ENCODE measurements at regions of chr11 and their contacts with region 1.

Region 1: GRCh38 chr11:119101759-119102423 is at the start of gene DPAGT1:
- DNase-seq: peak; percentile 86 to 89 (median 88)
- H3K4me3 ChIP-seq: peak within 1 kb of the TSS; percentile 87 to 98
- H3K4me3 Mint-ChIP-seq: peak within 1 kb of the TSS; percentile 93 to 99 (median 97)
- H3K27ac ChIP-seq: peak within 1 kb of the TSS; percentile 91
- H3K27ac Mint-ChIP-seq: peak within 1 kb of the TSS; percentile 93 to 100 (median 99)
- H3K4me1 ChIP-seq: peaks cover 41% of the 10 kb centered on the region
- H3K4me1 Mint-ChIP-seq: peaks cover 27 to 60% (median 43%) of the 10 kb centered on the region in 4 donors
- H3K27me3 ChIP-seq: no peaks in the 10 kb centered on the region
- H3K27me3 Mint-ChIP-seq: no peaks in the 10 kb centered on the region
- total RNA-seq, gene DPAGT1: 52.0 to 52.3 TPM

Region 2: DNA sequence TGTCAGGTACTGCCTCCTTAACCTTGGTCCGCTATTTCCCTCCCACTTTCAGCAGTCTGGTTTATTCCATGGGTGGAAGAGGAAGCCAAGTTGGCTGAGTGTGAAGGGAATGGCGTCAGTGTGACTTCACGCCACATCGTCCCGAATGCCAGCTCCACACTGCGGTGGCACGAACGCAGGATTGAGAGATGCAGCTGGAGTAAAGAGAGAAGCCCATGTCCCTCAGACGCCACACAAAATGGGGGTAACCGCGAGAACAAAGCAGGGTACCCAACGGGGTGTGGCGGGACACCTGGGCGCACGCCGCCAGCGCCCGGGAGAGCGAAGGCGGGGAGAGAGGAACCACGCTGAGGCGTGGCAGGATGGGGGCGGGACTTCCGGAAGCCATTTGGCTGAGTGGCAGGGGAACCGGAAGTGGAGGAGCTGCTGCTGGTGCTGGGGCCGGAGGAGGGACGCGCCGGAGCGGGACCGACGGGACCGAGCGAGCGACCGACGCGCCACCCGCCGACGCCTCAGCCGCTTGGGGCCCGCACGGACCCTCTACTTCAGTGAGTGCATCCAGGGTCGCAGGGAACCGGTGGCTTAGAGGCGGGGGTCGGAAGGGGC is 1957.9 kb before region 1 on chr11 and contains the start of gene PAFAH1B2:
- CTCF ChIA-PET with region 1: no interaction called
- POLR2A ChIA-PET with region 1: no interaction called
- intact Hi-C with region 1: loop called (anchors 5 kb)
- DNase-seq: peak; percentile 94 to 95 (median 94)
- H3K4me3 ChIP-seq: peak within 1 kb of the TSS; percentile 68 to 93
- H3K4me3 Mint-ChIP-seq: peak within 1 kb of the TSS; percentile 97 to 100 (median 99)
- H3K27ac ChIP-seq: peak within 1 kb of the TSS; percentile 70
- H3K27ac Mint-ChIP-seq: peak within 1 kb of the TSS; percentile 92 to 99 (median 98)
- H3K4me1 ChIP-seq: peaks cover 46% of the 10 kb centered on the region
- H3K4me1 Mint-ChIP-seq: peaks cover 33 to 56% (median 44%) of the 10 kb centered on the region in 4 donors
- H3K27me3 ChIP-seq: no peaks in the 10 kb centered on the region
- H3K27me3 Mint-ChIP-seq: peaks cover 2 to 6% of the 10 kb centered on the region in 2 donors
- total RNA-seq, gene PAFAH1B2: 61.6 to 64.2 TPM

Region 3: GRCh38 chr11:119057000-119057769 is 44.7 kb before region 1 on chr11 and contains the start of gene HYOU1:
- CTCF ChIA-PET with region 1: interaction called, 5 read pairs
- POLR2A ChIA-PET with region 1: interaction called, 12 read pairs
- intact Hi-C with region 1: loop called (anchors 1 kb)
- DNase-seq: peak; percentile 98
- H3K4me3 ChIP-seq: peak within 1 kb of the TSS; percentile 82 to 87
- H3K4me3 Mint-ChIP-seq: peak within 1 kb of the TSS; percentile 92 to 98 (median 97)
- H3K27ac ChIP-seq: peak within 1 kb of the TSS; percentile 91
- H3K27ac Mint-ChIP-seq: peak within 1 kb of the TSS; percentile 91 to 98 (median 97)
- H3K4me1 ChIP-seq: peaks cover 25% of the 10 kb centered on the region
- H3K4me1 Mint-ChIP-seq: peaks cover 20 to 52% (median 39%) of the 10 kb centered on the region in 4 donors
- H3K27me3 ChIP-seq: no peaks in the 10 kb centered on the region
- H3K27me3 Mint-ChIP-seq: no peaks in the 10 kb centered on the region
- total RNA-seq, gene HYOU1: 136 to 146 TPM

Region 4: GRCh38 chr11:119115484-119116234 is 13.8 kb after region 1 on chr11:
- CTCF ChIA-PET with region 1: interaction called, 7 read pairs
- POLR2A ChIA-PET with region 1: interaction called, 118 read pairs
- intact Hi-C with region 1: no loop called
- DNase-seq: peak; percentile 56 to 65 (median 58)
- H3K4me3 ChIP-seq: peak overlapping the region in 1 of 2 donors; percentile 38
- H3K4me3 Mint-ChIP-seq: peak overlapping the region; percentile 75 to 87 (median 86)
- H3K27ac ChIP-seq: peak overlapping the region; percentile 63
- H3K27ac Mint-ChIP-seq: peak overlapping the region; percentile 83 to 97 (median 97)
- H3K4me1 ChIP-seq: peaks cover 37% of the 10 kb centered on the region
- H3K4me1 Mint-ChIP-seq: peaks cover 17 to 51% (median 30%) of the 10 kb centered on the region in 4 donors
- H3K27me3 ChIP-seq: no peaks in the 10 kb centered on the region
- H3K27me3 Mint-ChIP-seq: no peaks in the 10 kb centered on the region

Region 5: DNA sequence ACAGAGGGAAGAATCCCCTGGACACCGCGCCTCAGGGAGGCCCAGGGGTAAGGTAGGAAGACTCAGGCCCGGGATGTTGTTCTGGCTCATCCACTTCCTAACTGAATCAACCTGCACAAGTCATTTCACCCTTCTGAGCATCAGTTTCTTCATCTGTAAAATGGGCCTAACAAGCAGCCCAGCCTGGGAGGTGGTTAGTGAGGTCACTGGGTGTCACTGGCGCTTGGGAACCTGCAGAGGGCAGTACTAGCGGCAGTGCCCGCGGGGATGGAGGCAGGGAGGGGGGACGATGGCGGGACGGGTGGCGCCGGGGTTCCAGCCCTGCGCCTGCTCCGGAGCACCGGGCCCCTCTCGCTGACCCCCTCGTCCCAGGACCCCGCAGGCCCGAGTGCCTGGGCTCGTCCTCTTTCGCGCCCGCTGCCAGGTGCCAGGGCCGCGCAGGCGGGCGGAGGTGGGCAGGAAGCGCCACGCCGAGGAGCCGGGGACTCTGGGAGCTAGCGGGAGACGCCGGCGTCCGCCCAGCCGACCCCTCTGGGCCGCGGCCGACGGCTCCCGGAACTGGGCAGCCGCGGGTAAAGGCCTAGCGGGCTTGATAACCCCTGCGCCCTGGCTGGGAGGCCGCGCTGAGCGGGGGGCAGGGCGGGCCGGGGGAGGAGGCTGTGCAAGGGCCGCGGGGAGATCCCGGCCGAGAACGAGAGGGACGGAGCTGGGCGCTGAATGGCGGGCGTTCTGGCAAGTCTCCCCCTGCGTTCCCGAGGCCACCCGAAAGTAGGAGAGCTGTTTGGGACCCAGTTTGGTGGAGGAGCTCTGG is 66.8 kb after region 1 on chr11 and contains the start of gene NLRX1:
- CTCF ChIA-PET with region 1: interaction called, 11 read pairs
- POLR2A ChIA-PET with region 1: interaction called, 11 read pairs
- intact Hi-C with region 1: no loop called
- DNase-seq: peak; percentile 81 to 83 (median 82)
- H3K4me3 ChIP-seq: peak within 1 kb of the TSS; percentile 78 to 79
- H3K4me3 Mint-ChIP-seq: peak within 1 kb of the TSS; percentile 89 to 91 (median 90)
- H3K27ac ChIP-seq: peak within 1 kb of the TSS; percentile 67
- H3K27ac Mint-ChIP-seq: peak within 1 kb of the TSS; percentile 68 to 90 (median 89)
- H3K4me1 ChIP-seq: peaks cover 6% of the 10 kb centered on the region
- H3K4me1 Mint-ChIP-seq: peaks cover 1 to 10% (median 8%) of the 10 kb centered on the region in 4 donors
- H3K27me3 ChIP-seq: no peaks in the 10 kb centered on the region
- H3K27me3 Mint-ChIP-seq: no peaks in the 10 kb centered on the region
- total RNA-seq, gene NLRX1: 8.8 to 9.2 TPM

Region 6: DNA sequence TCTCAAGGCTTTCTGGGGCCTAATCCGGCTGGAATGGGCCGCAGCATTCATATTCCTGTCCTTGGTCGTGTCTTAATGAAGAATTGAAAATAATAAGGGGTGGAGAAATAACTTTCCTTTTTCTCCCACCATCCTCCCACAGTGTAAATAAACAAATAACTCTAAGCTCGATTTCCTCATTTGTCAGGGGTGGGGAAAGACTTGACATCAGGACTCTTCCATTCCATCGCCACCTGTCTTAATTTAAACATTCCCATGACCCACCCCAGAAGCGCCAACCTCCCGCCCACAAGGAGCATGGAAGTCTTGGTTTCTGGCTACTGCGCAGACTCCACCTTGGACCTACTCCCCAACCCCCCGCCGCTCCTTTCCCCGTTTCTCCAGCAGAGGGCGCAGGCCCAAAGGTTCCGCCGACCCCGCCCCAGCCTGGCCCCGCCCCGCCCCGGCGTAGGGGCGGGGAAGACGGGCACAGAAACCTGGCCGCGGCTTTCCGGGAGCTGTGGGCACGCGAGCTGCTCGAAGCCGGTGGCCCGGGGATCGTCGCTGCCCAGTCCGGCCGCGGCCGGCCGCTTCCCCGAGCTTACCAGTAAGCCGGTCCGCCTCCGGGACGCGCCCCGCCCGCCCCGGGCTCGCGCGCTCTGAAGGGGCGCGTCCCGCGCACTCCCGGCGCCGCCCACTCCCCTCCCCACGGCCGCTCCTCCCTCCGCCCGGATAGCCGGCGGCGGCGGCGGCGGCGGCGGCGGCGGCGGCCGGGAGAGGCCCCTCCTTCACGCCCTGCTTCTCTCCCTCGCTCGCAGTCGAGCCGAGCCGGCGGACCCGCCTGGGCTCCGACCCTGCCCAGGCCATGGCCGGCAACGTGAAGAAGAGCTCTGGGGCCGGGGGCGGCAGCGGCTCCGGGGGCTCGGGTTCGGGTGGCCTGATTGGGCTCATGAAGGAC is 104.0 kb after region 1 on chr11 and contains the start of gene CBL:
- CTCF ChIA-PET with region 1: no interaction called
- POLR2A ChIA-PET with region 1: interaction called, 13 read pairs
- intact Hi-C with region 1: no loop called
- DNase-seq: peak; percentile 91 to 95 (median 92)
- H3K4me3 ChIP-seq: peak within 1 kb of the TSS; percentile 64 to 94
- H3K4me3 Mint-ChIP-seq: peak within 1 kb of the TSS; percentile 91 to 100 (median 96)
- H3K27ac ChIP-seq: peak within 1 kb of the TSS; percentile 77
- H3K27ac Mint-ChIP-seq: peak within 1 kb of the TSS; percentile 80 to 96 (median 94)
- H3K4me1 ChIP-seq: peaks cover 35% of the 10 kb centered on the region
- H3K4me1 Mint-ChIP-seq: peaks cover 15 to 54% (median 28%) of the 10 kb centered on the region in 4 donors
- H3K27me3 ChIP-seq: no peaks in the 10 kb centered on the region
- H3K27me3 Mint-ChIP-seq: no peaks in the 10 kb centered on the region
- total RNA-seq, gene CBL: 39.5 to 39.8 TPM

Measured in CD4-positive, alpha-beta memory T cell (primary cell).